Heart right ventricle (tissue), 16 donors: ENCODE measurements at regions of chr4 and their contacts with region 1.

Region 1: GRCh38 chr4:75118739-75119138 is 185.8 kb downstream of the PARM1 start:
- DNase-seq: no peak
- ATAC-seq: no peak
- H3K4me3 ChIP-seq: no peak overlapping the region
- H3K27ac ChIP-seq: no peak overlapping the region
- H3K4me1 ChIP-seq: no peaks in the 10 kb centered on the region
- H3K27me3 ChIP-seq: no peaks in the 10 kb centered on the region
- CTCF ChIP-seq: no peak

Region 2: DNA sequence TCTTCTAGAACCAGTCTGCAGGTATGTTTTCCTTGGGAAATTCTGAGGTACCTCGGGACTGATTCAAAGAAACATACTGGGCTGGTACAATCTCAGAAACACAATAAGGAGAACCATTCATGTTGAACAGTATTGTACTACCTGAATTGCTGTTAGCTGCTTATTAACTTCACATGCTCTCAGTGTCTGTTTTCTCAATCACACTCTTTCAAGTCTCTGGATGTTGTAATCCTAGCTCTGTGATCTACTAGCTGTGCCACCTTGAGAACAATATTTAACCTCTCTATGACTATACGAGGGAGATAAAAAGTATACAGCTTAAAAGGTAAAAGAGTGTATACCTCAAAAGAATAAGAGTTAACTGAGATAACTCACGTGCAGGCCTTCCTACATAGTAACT is 1291.9 kb after region 1 on chr4:
- intact Hi-C with region 1: loop called in 1 of 10 experiments (anchors 5 kb)
- DNase-seq: no peak
- ATAC-seq: no peak
- H3K4me3 ChIP-seq: no peak overlapping the region
- H3K27ac ChIP-seq: no peak overlapping the region
- H3K4me1 ChIP-seq: no peaks in the 10 kb centered on the region
- H3K27me3 ChIP-seq: no peaks in the 10 kb centered on the region
- CTCF ChIP-seq: no peak